Posterior vena cava (tissue), 2 donors: ENCODE measurements at regions of chr5 and their contacts with region 1.

Region 1: GRCh38 chr5:68353605-68354004 is 138.0 kb downstream of the PIK3R1 start:
- DNase-seq: no peak

Region 2: DNA sequence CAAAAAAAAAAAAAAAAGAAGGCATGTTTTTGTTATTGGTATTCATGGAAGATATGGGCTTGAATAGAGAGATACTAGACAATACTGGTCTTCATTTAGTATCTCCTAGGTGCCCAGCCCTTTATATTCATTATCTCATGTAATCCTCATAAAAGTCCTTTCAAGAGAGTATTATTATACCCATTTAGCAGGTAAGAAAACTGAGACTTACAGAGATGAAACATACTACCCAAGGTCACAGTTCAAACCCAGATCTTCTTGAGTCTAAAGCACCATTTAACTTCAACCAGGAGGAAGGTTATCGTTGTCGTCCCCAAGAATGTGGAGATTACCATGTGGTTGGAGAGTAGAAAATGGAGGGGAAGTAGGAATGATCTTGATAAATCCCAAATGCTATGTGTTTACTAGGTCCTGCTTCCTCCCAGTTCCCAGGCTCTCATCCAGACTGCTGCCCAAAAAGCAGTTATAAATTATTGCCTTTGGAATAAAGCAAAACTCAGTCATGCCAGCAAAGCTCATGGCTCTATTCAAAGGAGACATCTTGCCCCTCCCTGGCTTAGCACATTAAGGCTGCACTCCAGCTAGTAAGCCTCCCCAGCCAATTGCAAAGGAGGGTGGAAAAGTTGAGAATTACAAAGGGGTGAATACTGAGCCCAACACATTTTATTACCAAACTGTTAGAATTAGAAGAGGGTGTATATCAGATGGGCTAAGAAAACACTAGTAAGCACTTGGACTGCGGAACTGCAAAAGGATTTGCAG is 25.9 kb after region 1 on chr5:
- intact Hi-C with region 1: loop called in 1 of 2 experiments (anchors 1 kb)
- DNase-seq: no peak